Activated B cell treated with CpG ODN at 0.5 μM for 24 hours (primary cell): ENCODE measurements at regions of chr19 and their contacts with region 1.

Region 1: DNA sequence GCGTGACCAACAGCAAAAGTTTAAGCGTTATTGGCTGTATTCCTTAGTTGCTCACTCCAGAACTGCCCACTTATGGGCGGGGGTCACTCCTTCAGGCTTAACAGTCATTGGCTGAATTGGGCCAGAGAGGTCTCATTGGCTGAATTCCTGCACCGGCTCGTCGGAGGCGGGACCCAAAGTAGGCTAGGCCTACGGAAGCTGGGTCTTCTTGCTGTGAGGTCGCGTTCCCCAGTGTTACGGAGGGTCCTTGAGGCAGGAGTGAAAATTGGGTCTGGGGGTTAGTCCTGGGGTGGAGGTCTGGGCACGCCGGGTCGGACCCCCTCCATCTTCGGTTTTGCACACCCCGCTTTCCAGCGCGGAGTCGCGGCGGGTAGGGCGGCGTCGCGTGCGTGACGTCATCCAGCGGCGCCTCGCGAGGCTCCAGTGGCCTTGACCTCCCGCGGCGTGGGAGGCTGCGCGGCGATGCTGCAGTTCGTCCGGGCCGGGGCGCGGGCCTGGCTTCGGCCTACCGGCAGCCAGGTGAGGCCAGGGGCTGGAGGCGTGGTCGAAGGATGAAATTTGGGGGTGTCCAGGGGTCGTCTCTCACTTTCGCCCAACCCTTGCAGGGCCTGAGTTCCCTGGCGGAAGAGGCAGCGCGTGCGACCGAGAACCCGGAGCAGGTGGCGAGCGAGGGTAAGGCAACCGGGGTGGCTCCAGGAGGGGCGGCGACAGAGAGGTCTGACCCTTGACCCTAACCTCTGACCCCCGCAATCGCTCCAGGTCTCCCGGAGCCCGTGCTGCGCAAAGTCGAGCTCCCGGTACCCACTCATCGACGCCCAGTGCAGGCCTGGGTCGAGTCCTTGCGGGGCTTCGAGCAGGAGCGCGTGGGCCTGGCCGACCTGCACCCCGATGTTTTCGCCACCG is at the start of gene MRPL4:
- DNase-seq: peak; percentile 92
- ATAC-seq: peak; percentile 95
- H3K4me3 Mint-ChIP-seq: peak within 1 kb of the TSS; percentile 98
- H3K27ac Mint-ChIP-seq: peak within 1 kb of the TSS; percentile 96
- H3K4me1 Mint-ChIP-seq: peaks cover 33% of the 10 kb centered on the region
- H3K27me3 Mint-ChIP-seq: no peaks in the 10 kb centered on the region
- CTCF ChIP-seq: no peak
- total RNA-seq, gene MRPL4: 66.9 and 68.3 TPM in 2 replicates

Region 2: GRCh38 chr19:10000171-10000826 is 251.7 kb before region 1 on chr19:
- CTCF ChIA-PET with region 1: no interaction called
- POLR2A ChIA-PET with region 1: interaction called, 12 read pairs
- intact Hi-C with region 1: no loop called
- DNase-seq: peak; percentile 24
- ATAC-seq: no peak
- H3K4me3 Mint-ChIP-seq: no peak overlapping the region
- H3K27ac Mint-ChIP-seq: no peak overlapping the region
- H3K4me1 Mint-ChIP-seq: no peaks in the 10 kb centered on the region
- H3K27me3 Mint-ChIP-seq: peaks cover 35% of the 10 kb centered on the region
- CTCF ChIP-seq: no peak

Region 3: DNA sequence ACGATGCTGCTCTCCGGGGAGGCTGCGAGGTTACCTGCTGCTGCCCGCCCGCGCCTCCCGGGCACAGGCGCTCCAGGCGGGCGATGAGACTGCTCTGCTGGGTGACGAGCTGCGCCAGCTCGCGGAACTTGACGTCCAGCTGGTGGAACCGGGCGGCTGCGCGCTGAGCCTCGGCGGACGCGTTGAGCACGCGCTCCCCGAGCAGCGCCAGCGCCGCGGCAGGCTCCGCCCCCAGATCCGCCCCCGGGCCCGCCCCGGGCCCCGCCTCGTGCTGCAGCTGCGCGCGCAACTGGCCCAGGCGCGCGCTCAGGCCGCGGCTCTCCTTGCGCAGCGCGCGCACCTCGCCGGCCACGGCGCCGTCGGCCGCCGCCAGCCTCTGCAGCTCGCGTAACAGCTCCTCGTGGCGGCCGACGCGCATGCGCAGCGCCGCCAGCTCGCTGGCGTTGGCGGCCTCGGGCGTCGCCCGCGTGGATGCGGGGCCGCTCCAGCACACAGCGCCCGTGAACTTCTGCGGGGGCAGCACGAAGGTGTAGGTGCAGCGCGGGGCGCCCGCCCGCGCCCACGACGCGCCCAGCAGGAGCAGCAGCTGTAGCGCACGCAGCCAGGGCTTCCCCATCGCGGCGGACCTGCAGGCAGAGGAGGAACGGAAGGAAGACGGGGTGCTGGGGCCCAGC is 156.0 kb before region 1 on chr19:
- CTCF ChIA-PET with region 1: interaction called, 21 read pairs
- POLR2A ChIA-PET with region 1: interaction called, 6 read pairs
- intact Hi-C with region 1: loop called (anchors 1 kb)
- DNase-seq: peak; percentile 97
- ATAC-seq: peak; percentile 87
- H3K4me3 Mint-ChIP-seq: peak overlapping the region; percentile 32
- H3K27ac Mint-ChIP-seq: peak overlapping the region; percentile 59
- H3K4me1 Mint-ChIP-seq: peaks cover 50% of the 10 kb centered on the region
- H3K27me3 Mint-ChIP-seq: no peaks in the 10 kb centered on the region
- CTCF ChIP-seq: no peak

Region 4: DNA sequence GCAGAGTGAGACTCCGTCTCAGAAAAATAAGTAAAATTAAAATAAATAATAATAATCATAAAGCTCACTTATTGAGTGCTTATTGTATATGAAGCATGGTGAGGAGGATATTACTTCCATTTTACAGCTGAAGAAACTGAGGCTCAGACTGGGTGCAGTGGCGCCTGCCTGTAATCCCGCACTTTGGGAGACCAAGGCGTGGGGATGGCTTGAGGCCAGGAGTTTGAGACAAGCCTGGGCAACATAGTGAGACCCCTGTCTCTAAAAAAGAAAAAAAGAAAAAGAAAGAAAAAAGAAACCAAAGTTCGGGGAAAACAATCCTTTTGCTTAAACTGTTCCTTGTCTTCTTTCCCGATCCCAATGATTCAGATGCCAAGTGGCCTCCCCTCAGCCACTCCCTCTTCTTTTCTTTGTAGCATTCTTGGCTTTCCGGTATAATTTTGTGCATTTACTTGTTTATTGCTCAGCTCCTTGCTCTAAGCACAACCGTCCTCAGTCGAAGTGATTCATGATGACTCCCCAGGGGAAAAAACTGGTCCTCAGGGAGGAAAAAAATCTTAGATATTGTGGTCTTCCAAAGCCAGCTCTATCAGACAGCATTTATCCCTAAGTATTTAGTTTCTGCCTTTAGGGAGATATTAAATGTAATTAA is 131.4 kb before region 1 on chr19:
- CTCF ChIA-PET with region 1: interaction called, 11 read pairs
- POLR2A ChIA-PET with region 1: no interaction called
- intact Hi-C with region 1: loop called (anchors 1 kb)
- DNase-seq: no peak
- ATAC-seq: no peak
- H3K4me3 Mint-ChIP-seq: no peak overlapping the region
- H3K27ac Mint-ChIP-seq: no peak overlapping the region
- H3K4me1 Mint-ChIP-seq: peaks cover 29% of the 10 kb centered on the region
- H3K27me3 Mint-ChIP-seq: no peaks in the 10 kb centered on the region
- CTCF ChIP-seq: no peak

Region 5: DNA sequence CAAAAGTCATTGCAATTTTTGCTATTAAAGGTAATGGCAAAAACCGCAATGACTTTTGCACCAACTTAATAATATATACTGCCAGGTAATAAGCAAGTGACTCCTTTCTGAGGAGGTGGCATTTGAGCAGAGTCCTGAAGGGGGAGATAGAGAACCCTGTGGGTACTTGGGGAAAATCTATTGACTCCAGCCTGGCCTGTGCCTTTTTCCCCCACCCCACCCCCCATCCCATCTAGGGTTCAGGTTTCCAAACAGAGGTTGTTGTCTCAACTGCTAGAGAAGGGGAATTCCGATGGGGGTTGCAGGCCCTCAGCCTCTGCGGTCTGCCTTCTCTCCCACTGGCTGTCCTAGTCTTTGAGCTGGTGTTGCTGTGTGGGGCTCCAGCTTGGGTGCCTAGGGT is 32.4 kb before region 1 on chr19:
- CTCF ChIA-PET with region 1: interaction called, 93 read pairs
- POLR2A ChIA-PET with region 1: interaction called, 12 read pairs
- intact Hi-C with region 1: loop called (anchors 5 kb)
- DNase-seq: no peak
- ATAC-seq: peak; percentile 87
- H3K4me3 Mint-ChIP-seq: no peak overlapping the region
- H3K27ac Mint-ChIP-seq: no peak overlapping the region
- H3K4me1 Mint-ChIP-seq: peaks cover 9% of the 10 kb centered on the region
- H3K27me3 Mint-ChIP-seq: no peaks in the 10 kb centered on the region
- CTCF ChIP-seq: no peak

Region 6: DNA sequence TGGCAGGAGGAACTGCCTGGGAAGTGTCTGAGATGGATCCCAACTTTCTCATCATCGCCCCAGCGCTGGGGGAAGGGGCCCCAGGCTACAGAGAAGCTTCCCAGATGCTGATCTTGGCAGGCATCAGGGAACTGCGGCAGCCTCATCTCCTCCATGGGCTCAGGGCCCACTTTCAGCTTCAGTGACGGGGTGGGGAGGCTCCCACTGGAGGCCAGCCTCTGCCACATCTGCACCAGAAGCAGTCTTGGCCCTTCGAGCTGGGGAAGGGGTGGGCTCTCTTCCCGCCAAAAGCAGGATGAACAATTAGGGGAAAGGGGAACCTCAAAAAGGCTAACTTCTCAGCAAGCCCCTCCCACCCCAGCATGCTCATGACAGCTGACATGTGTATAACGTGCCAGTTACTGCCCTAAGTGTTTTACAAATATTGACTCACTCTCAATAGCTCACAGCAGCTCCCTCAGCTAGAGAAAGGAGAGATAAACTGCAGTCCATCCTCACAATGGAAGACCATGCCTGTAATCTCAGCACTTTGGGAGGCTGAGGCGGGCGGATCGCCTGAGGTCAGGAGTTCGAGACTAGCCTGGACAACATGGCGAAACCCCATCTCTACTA is 13.8 kb before region 1 on chr19:
- CTCF ChIA-PET with region 1: interaction called, 14 read pairs
- POLR2A ChIA-PET with region 1: interaction called, 14 read pairs
- intact Hi-C with region 1: loop called (anchors 1 kb)
- DNase-seq: no peak
- ATAC-seq: no peak
- H3K4me3 Mint-ChIP-seq: no peak overlapping the region
- H3K27ac Mint-ChIP-seq: peak overlapping the region; percentile 73
- H3K4me1 Mint-ChIP-seq: peaks cover 51% of the 10 kb centered on the region
- H3K27me3 Mint-ChIP-seq: no peaks in the 10 kb centered on the region
- CTCF ChIP-seq: no peak

Region 7: GRCh38 chr19:10339380-10339960 is 87.4 kb after region 1 on chr19 and contains the start of gene ICAM3:
- CTCF ChIA-PET with region 1: no interaction called
- POLR2A ChIA-PET with region 1: no interaction called
- intact Hi-C with region 1: no loop called
- DNase-seq: peak; percentile 62
- ATAC-seq: peak; percentile 96
- H3K4me3 Mint-ChIP-seq: peak within 1 kb of the TSS; percentile 97
- H3K27ac Mint-ChIP-seq: peak within 1 kb of the TSS; percentile 92
- H3K4me1 Mint-ChIP-seq: peaks cover 29% of the 10 kb centered on the region
- H3K27me3 Mint-ChIP-seq: no peaks in the 10 kb centered on the region
- CTCF ChIP-seq: no peak
- total RNA-seq, gene ICAM3: 147 and 166 TPM in 2 replicates

Region 8: DNA sequence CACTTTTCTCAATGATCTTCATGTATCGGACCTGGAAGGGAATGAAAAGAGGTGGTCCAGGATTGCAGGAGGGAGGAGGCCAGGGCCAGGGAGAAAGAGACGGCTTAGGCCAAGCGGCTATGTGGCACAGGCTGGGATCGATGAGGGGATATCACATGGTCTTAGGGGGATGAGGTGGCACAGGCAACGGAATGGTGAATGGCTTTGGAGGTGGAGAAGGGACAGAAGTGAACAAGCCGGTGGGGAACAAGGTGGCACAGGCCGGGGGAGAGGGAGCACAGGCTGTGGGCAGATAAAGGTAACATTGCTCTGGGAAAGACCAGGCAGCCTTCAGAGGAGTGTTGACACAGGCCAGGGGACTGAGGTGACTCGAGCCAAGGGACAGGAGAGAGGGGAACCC is 322.4 kb after region 1 on chr19:
- CTCF ChIA-PET with region 1: no interaction called
- POLR2A ChIA-PET with region 1: no interaction called
- intact Hi-C with region 1: no loop called
- DNase-seq: no peak
- ATAC-seq: no peak
- H3K4me3 Mint-ChIP-seq: no peak overlapping the region
- H3K27ac Mint-ChIP-seq: no peak overlapping the region
- H3K4me1 Mint-ChIP-seq: peaks cover 8% of the 10 kb centered on the region
- H3K27me3 Mint-ChIP-seq: no peaks in the 10 kb centered on the region
- CTCF ChIP-seq: no peak